MCF 10A (cell line): ENCODE measurements at regions of chr20 and their contacts with region 1.

Region 1: DNA sequence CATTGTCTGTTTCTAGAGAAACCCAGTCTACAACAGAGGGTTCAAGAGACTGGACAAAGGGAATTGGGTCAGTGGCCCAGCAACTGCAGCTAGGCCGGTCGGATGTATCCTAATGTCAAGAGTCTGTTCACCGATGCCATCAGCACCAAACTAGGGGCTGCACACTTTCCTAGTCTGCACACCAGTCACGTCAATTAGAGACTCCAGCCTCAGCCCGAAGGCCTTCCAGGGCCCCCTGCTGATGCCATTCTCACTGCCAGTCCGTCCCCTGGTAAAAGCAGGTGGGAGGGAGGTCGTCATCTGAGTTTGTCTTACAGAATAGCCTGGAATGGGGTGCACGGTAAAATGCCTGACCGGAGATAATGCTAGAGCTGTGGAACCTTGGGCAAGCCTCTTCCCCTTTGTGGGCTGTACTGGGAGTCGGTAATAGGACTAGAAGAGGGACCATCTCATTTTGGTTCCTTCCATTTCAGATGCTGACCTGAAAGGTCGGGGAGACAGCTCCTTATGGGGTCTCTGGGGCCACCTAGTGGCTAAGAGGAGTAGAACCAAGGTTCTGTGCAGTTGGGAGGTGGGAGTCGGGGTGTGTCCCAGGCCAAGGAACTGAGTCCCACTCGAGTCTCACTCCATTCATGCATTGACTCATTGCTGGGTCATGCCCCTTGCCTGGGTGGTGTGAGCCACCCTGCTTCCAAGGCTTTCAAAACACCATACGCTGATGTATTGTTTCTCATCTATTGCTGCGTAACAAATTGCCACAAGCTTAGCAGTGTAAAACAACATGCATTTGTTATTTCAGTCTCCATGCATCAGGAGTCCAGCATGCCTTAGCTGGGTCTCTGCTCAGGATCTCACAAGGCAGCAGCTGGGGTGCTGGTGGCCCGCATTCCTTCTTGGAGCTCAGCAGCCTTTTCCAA is 5.1 kb downstream of the SOX12 start:
- DNase-seq: peak; percentile 73
- H3K4me3 Mint-ChIP-seq: peak overlapping the region; percentile 45
- H3K27ac Mint-ChIP-seq: peak overlapping the region; percentile 55
- H3K4me1 Mint-ChIP-seq: peaks cover 24% of the 10 kb centered on the region
- H3K27me3 Mint-ChIP-seq: no peaks in the 10 kb centered on the region
- CTCF ChIP-seq: peak; percentile 86

Region 2: GRCh38 chr20:145877-146276 is 184.6 kb before region 1 on chr20:
- CTCF ChIA-PET with region 1: no interaction called
- POLR2A ChIA-PET with region 1: no interaction called
- intact Hi-C with region 1: no loop called
- DNase-seq: no peak
- H3K4me3 Mint-ChIP-seq: no peak overlapping the region
- H3K27ac Mint-ChIP-seq: no peak overlapping the region
- H3K4me1 Mint-ChIP-seq: no peaks in the 10 kb centered on the region
- H3K27me3 Mint-ChIP-seq: peaks cover 86% of the 10 kb centered on the region
- CTCF ChIP-seq: no peak

Region 3: GRCh38 chr20:208942-209566 is 121.4 kb before region 1 on chr20:
- CTCF ChIA-PET with region 1: interaction called, 6 read pairs
- POLR2A ChIA-PET with region 1: interaction called, 4 read pairs
- intact Hi-C with region 1: loop called (anchors 1 kb)
- DNase-seq: peak; percentile 61
- H3K4me3 Mint-ChIP-seq: no peak overlapping the region
- H3K27ac Mint-ChIP-seq: no peak overlapping the region
- H3K4me1 Mint-ChIP-seq: no peaks in the 10 kb centered on the region
- H3K27me3 Mint-ChIP-seq: peaks cover 54% of the 10 kb centered on the region
- CTCF ChIP-seq: peak; percentile 62

Region 4: DNA sequence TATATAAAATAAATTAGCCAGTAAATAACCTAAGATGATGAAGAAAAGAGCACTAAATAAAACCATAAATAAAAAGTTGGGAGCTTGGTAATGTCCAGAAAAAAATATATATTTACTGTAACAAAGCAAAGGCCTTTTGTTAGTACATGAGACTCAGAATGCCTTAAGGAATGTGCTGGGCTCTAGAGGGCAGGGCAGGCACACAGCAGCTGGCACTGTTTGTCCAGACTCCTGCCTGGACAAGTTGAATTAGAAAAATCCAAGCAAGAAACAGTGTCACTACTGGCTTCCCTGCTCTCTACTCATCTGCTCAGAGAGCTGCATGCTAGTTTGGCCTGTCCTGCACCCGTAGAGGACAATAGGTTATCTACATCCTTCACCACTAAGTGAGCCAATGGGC is 94.6 kb before region 1 on chr20:
- CTCF ChIA-PET with region 1: interaction called, 53 read pairs
- POLR2A ChIA-PET with region 1: interaction called, 13 read pairs
- intact Hi-C with region 1: loop called (anchors 1 kb)
- DNase-seq: peak; percentile 47
- H3K4me3 Mint-ChIP-seq: no peak overlapping the region
- H3K27ac Mint-ChIP-seq: peak overlapping the region; percentile 39
- H3K4me1 Mint-ChIP-seq: peaks cover 5% of the 10 kb centered on the region
- H3K27me3 Mint-ChIP-seq: peaks cover 25% of the 10 kb centered on the region
- CTCF ChIP-seq: peak; percentile 25

Region 5: GRCh38 chr20:284172-284790 is 46.2 kb before region 1 on chr20:
- CTCF ChIA-PET with region 1: interaction called, 15 read pairs
- POLR2A ChIA-PET with region 1: interaction called, 32 read pairs
- intact Hi-C with region 1: no loop called
- DNase-seq: no peak
- H3K4me3 Mint-ChIP-seq: no peak overlapping the region
- H3K27ac Mint-ChIP-seq: no peak overlapping the region
- H3K4me1 Mint-ChIP-seq: peaks cover 1% of the 10 kb centered on the region
- H3K27me3 Mint-ChIP-seq: no peaks in the 10 kb centered on the region
- CTCF ChIP-seq: no peak

Region 6: DNA sequence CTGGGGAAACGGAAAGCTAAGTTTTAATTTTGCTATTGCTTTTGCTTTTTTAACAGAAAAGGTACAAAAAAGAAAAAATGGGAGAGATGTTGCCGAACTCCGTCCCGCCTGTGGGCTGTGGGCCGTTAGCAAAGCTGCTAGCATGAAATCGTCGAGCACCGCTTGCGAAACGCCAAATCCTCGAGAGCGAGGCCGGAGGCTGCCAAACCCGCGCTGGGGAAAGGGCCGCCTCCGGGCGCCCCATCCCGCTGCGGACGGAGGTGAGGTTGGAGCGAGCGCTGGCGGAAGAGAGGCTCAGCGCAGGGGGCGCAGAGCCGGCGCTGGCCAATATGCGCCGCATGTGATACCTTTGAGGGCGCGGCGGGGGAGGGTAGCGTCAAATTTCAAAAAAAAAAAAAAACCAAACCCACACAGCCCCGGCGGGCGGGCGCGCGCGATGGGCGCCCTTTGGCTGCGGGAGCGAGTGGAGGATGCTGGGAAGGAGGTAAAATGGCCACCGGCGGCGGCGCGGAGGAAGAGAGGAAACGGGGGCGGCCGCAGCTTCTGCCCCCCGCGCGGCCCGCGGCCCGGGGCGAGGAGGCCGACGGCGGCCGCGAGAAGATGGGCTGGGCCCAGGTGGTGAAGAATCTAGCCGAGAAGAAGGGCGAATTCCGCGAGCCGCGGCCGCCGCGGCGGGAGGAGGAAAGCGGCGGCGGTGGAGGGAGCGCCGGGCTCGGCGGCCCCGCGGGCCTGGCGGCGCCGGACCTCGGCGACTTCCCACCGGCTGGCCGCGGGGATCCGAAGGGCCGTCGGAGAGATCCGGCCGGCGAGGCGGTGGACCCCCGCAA is 33.2 kb before region 1 on chr20 and contains the start of gene ZCCHC3:
- CTCF ChIA-PET with region 1: interaction called, 18 read pairs
- POLR2A ChIA-PET with region 1: no interaction called
- intact Hi-C with region 1: no loop called
- DNase-seq: peak; percentile 96
- H3K4me3 Mint-ChIP-seq: peak within 1 kb of the TSS; percentile 93
- H3K27ac Mint-ChIP-seq: peak within 1 kb of the TSS; percentile 99
- H3K4me1 Mint-ChIP-seq: peaks cover 31% of the 10 kb centered on the region
- H3K27me3 Mint-ChIP-seq: no peaks in the 10 kb centered on the region
- CTCF ChIP-seq: no peak
- total RNA-seq, gene ZCCHC3: 11.7 and 12.1 TPM in 2 replicates

Region 7: GRCh38 chr20:341682-342081 is 11.2 kb after region 1 on chr20:
- CTCF ChIA-PET with region 1: interaction called, 32 read pairs
- POLR2A ChIA-PET with region 1: interaction called, 29 read pairs
- intact Hi-C with region 1: no loop called
- DNase-seq: peak; percentile 94
- H3K4me3 Mint-ChIP-seq: no peak overlapping the region
- H3K27ac Mint-ChIP-seq: peak overlapping the region; percentile 66
- H3K4me1 Mint-ChIP-seq: peaks cover 9% of the 10 kb centered on the region
- H3K27me3 Mint-ChIP-seq: no peaks in the 10 kb centered on the region
- CTCF ChIP-seq: no peak

Region 8: DNA sequence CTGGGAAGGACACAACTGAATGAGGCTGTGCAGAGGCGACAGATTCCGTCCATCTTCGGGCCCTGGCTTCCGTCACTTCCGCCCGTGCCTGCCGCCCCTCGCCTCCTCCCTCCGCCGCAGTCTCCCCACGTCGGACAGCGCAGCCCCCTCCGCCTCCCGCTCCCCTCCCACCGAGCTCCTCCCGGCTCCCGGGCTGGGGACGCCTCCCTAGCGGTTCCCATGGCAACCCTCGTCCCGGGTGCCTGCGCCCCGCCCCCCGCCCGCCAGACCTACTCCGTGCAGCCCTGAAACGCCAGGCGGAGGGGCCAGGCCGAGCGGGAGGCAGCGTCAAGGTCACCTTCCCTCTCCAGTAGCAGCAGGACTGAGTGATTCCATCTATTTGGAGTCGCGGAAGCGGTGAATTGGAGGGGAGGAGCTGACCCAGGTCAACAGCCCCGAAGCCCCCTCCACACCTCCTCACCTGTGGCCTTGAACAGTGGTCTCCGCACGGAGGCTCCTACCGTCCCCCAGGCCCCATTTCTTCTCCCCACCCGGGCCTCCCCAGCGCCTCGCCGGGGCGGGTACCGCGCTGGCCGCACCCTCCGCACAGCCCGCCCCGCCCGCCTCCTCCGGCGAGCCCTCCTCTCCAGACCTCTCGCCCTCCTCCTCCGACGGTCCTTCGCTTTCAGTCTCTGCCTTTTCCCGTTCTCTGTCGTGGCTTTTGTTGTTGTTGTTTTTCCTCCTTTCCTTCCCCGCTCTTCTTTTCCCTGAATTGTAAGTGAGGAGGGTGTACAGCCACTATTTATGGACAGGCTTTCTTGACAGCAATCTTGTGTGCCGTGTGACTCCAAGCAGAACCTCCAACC is 17.4 kb after region 1 on chr20:
- CTCF ChIA-PET with region 1: interaction called, 32 read pairs
- POLR2A ChIA-PET with region 1: interaction called, 29 read pairs
- intact Hi-C with region 1: no loop called
- DNase-seq: peak; percentile 86
- H3K4me3 Mint-ChIP-seq: peak overlapping the region; percentile 83
- H3K27ac Mint-ChIP-seq: peak overlapping the region; percentile 62
- H3K4me1 Mint-ChIP-seq: peaks cover 16% of the 10 kb centered on the region
- H3K27me3 Mint-ChIP-seq: no peaks in the 10 kb centered on the region
- CTCF ChIP-seq: no peak